HCT116 (cell line): ENCODE measurements at regions of chr7 and their contacts with region 1.

Region 1: GRCh38 chr7:102456327-102456726 is 8.3 kb downstream of the ALKBH4 start:
- DNase-seq: peak; percentile 65
- ATAC-seq: peak; percentile 84
- H3K4me3 ChIP-seq: 0 out of 4 replicates have a peak overlapping the region, but pooled peaks of 1 of the 2 experiments have one; percentile 21
- H3K27ac ChIP-seq: peak overlapping the region; percentile 68
- H3K4me1 ChIP-seq: peaks cover 21 to 23% of the 10 kb centered on the region in 2 experiments
- H3K27me3 ChIP-seq: no peaks in the 10 kb centered on the region
- CTCF ChIP-seq: no peak
- POLR2A ChIP-seq: no peak
- RAD21 ChIP-seq: no peak

Region 2: DNA sequence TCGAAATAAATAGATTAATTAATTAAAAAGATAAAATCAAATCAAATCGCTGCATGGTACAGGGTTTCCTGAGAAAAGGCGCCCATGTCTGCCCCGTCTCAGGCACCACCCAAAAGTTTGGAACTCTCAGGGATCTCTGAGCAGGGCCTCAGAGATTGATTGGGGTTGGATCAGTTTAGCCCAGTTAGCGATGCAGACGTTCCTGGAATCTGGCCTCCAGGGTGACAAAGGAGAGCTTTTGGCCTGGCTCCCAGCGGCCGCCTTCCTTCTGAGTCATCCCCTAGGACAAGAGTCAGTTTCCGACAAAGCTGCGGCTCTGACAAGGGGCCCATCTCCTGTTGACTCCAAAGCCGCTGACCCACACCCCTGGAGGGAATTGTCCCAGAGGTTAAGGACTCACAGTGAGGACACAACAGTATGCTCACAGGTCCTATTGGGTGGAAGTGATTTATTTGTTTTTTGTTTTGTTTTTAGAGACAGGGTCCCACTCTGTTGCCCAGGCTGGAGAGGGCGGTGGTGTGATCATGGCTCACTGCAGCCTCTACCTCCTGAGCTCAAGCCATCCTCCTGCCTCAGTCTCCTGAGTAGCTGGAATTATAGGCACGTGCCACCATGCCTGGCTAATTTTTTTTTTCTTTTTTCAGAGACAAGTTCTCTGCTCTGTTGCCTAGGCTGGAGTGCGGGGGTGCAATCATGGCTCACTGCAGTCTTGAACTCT is 16.1 kb before region 1 on chr7:
- CTCF ChIA-PET with region 1: interaction called, 4 read pairs
- POLR2A ChIA-PET with region 1: no interaction called
- RAD21 ChIA-PET with region 1: interaction called in 1 of 2 experiments, 5 read pairs
- intact Hi-C with region 1: loop called (anchors 2 kb)
- DNase-seq: peak; percentile 79
- ATAC-seq: peak; percentile 94
- H3K4me3 ChIP-seq: peak overlapping the region in 1 of 2 experiments; percentile 25; a peak in 2 of 4 replicates
- H3K27ac ChIP-seq: peak overlapping the region; percentile 60
- H3K4me1 ChIP-seq: peaks cover 17 to 41% of the 10 kb centered on the region in 2 experiments
- H3K27me3 ChIP-seq: no peaks in the 10 kb centered on the region
- CTCF ChIP-seq: no peak
- POLR2A ChIP-seq: no peak
- RAD21 ChIP-seq: no peak